Calu3 (cell line): ENCODE measurements at regions of chr9 and their contacts with region 1.

Region 1: DNA sequence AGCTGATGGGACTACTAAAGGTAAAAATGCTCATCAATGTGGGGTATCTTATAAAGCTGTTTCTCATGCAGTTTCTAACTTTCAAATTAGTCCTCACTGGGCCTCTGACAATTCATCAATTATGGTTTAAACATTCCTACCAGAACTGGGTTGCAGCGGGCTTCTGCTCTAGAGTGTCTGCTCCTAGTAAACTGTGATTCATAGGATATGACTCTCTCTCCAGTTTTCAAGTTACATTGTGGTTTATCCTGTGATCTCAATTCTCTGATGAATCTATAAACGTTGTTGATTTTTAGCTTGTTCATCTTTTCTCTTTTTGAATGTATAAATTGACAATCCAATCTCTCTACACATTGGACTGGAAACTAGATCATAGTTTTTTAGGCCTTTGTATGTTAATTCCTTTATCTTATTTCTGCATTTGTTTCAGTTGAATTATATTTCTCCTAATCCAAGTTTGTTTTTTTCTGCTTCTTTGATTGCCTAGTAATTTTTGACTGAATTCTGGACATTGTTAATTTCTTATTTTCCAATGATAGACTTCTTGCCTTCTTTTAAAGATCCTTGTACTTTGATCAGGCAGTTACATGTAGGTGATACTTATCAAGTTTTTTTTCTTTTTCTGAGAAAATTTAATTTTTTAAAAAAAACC is 822.6 kb downstream of the TLE1 start:
- DNase-seq: no peak
- H3K4me3 Mint-ChIP-seq: no peak overlapping the region
- H3K27ac Mint-ChIP-seq: no peak overlapping the region
- H3K4me1 Mint-ChIP-seq: no peaks in the 10 kb centered on the region
- H3K27me3 Mint-ChIP-seq: no peaks in the 10 kb centered on the region
- CTCF ChIP-seq: no peak

Region 2: GRCh38 chr9:80692751-80693150 is 174.0 kb before region 1 on chr9:
- CTCF ChIA-PET with region 1: interaction called, 12 read pairs
- intact Hi-C with region 1: no loop called
- DNase-seq: no peak
- H3K4me3 Mint-ChIP-seq: no peak overlapping the region
- H3K27ac Mint-ChIP-seq: no peak overlapping the region
- H3K4me1 Mint-ChIP-seq: peaks cover 8% of the 10 kb centered on the region
- H3K27me3 Mint-ChIP-seq: no peaks in the 10 kb centered on the region
- CTCF ChIP-seq: no peak

Region 3: DNA sequence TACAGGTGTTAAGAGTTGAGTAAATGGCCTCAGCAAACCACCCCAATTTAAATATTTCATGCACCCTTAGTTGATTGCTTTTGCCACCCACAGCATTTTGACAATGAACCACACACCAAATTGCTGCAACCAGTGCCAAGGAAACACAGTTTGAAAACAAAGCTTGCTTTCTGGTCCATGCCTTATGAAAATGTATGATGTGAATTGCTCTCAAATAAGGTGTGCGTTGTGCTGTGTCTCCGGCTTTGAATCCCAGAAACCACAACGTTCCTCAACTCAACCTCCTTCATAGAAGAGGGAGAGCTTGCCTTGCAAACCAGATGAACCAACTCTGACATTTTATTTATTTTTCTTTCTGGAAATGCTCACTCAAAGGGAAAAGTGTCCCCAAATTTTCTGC is 59.9 kb after region 1 on chr9:
- CTCF ChIA-PET with region 1: no interaction called
- intact Hi-C with region 1: no loop called
- DNase-seq: no peak
- H3K4me3 Mint-ChIP-seq: no peak overlapping the region
- H3K27ac Mint-ChIP-seq: no peak overlapping the region
- H3K4me1 Mint-ChIP-seq: no peaks in the 10 kb centered on the region
- H3K27me3 Mint-ChIP-seq: no peaks in the 10 kb centered on the region
- CTCF ChIP-seq: no peak